Activated CD4-positive, alpha-beta memory T cell treated with anti-CD3 and anti-CD28 coated beads for 36 hours (primary cell): ENCODE measurements at regions of chr10 and their contacts with region 1.

Region 1: DNA sequence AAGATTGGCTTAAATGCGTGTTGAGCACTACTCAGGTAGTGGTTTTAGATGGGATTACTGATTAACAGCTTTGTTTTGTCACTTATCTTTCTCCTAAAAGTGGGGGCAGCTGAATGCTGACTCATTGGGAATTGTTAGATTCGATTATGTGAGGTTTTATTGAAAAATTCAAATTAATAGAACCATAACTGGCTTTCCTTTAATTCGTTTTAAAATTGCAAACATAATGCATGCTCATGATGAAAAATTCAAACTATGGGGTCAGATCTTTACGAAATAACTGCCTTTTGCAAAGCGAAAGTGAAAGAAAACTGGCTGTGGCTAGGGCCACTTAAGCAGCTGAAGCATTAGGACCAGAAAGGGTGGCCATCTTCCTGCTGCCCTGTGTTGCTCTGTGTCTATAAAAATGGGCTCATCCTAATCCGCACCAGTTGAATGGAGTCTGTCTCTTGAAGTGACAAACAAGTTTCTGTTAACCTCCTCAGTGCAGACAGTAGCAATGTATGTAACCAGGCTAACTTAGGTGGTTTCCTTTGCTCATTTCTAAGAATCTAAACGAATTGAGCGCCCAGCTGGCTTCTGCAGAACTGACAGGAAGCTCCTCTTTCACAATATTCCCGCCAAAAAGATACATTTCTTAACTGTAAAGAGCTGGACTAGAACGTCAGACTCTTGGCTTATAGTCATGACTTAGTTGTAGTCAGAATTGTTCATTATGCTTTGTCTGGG is 27.8 kb downstream of the DENND10 start:
- DNase-seq: peak; percentile 76
- H3K4me3 Mint-ChIP-seq: peak overlapping the region; percentile 80
- H3K27ac Mint-ChIP-seq: peak overlapping the region; percentile 100
- H3K4me1 Mint-ChIP-seq: peaks cover 60% of the 10 kb centered on the region
- H3K27me3 Mint-ChIP-seq: no peaks in the 10 kb centered on the region

Region 2: DNA sequence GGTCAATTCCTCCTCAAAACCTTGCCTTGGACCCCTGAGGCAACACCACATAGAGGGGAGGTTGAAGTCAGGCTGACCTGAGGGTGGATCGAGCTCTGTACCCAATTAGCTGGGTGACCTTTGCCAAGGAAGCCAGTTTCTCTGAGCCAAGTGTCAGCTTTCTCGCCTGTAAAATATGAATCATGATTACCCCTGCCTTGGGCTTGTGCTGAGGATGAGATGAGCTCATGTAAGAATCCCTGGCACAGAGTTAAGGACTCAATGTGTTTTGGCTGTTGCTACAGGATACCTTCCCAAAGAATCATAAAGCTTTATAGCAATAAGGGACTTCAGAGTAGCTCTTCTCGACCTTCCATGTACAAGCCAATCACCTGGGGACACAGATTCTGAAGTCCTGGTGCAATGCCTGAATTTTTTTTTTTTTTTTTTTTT is 333.4 kb before region 1 on chr10:
- CTCF ChIA-PET with region 1: no interaction called
- POLR2A ChIA-PET with region 1: no interaction called
- intact Hi-C with region 1: no loop called
- DNase-seq: no peak
- H3K4me3 Mint-ChIP-seq: no peak overlapping the region
- H3K27ac Mint-ChIP-seq: no peak overlapping the region
- H3K4me1 Mint-ChIP-seq: no peaks in the 10 kb centered on the region
- H3K27me3 Mint-ChIP-seq: peaks cover 15% of the 10 kb centered on the region

Region 3: GRCh38 chr10:119090968-119091367 is 40.7 kb before region 1 on chr10:
- CTCF ChIA-PET with region 1: no interaction called
- POLR2A ChIA-PET with region 1: interaction called, 8 read pairs
- intact Hi-C with region 1: loop called (anchors 1 kb)
- DNase-seq: peak; percentile 55
- H3K4me3 Mint-ChIP-seq: peak overlapping the region; percentile 25
- H3K27ac Mint-ChIP-seq: peak overlapping the region; percentile 74
- H3K4me1 Mint-ChIP-seq: peaks cover 47% of the 10 kb centered on the region
- H3K27me3 Mint-ChIP-seq: no peaks in the 10 kb centered on the region

Region 4: GRCh38 chr10:119103903-119104652 is 27.6 kb before region 1 on chr10 and contains the start of gene DENND10:
- CTCF ChIA-PET with region 1: interaction called, 5 read pairs
- POLR2A ChIA-PET with region 1: interaction called, 6 read pairs
- intact Hi-C with region 1: loop called (anchors 1 kb)
- DNase-seq: peak; percentile 87
- H3K4me3 Mint-ChIP-seq: peak within 1 kb of the TSS; percentile 75
- H3K27ac Mint-ChIP-seq: peak within 1 kb of the TSS; percentile 38
- H3K4me1 Mint-ChIP-seq: peaks cover 20% of the 10 kb centered on the region
- H3K27me3 Mint-ChIP-seq: no peaks in the 10 kb centered on the region
- total RNA-seq, gene DENND10: 29.8 to 31.4 TPM

Region 5: GRCh38 chr10:119178372-119179119 is 46.9 kb after region 1 on chr10 and contains the start of gene PRDX3:
- CTCF ChIA-PET with region 1: interaction called, 4 read pairs
- POLR2A ChIA-PET with region 1: interaction called, 3 read pairs
- intact Hi-C with region 1: loop called (anchors 1 kb)
- DNase-seq: peak; percentile 96
- H3K4me3 Mint-ChIP-seq: peak within 1 kb of the TSS; percentile 88
- H3K27ac Mint-ChIP-seq: peak within 1 kb of the TSS; percentile 94
- H3K4me1 Mint-ChIP-seq: peaks cover 35% of the 10 kb centered on the region
- H3K27me3 Mint-ChIP-seq: no peaks in the 10 kb centered on the region
- total RNA-seq, gene PRDX3: 173 to 182 TPM